ENCODE measurements at regions of chr3 and their contacts with region 1.

Region 1: DNA sequence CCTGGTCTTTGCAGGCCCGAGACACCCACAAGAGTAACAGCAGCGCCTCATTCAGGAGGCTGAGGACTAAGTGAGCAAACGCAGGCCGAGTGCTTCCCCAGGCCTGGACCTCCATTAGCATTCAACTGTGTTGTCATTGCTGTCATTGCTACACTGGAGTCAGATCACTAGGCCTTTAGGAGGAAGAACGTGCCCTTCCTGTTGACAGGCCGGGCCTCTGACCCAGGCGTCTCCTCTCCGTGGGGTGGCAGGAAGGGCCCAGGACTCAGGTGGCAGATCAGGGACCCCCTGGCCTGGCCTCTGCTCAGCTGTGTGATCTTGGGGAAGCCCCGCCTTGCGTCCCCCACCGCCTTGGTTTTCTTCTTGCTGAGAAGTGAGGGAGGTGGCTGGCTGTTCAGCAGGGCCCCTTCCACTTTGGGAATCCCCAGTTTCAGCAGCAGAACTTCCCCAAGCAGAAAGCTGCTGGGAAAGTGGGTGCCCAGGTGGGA is 19.1 kb downstream of the ZDHHC19 start:
- DNase-seq: peak in 7 of 9 experiments; percentile 12 to 87 (median 51)
- ATAC-seq: peak; percentile 39
- H3K4me3 ChIP-seq: no peak overlapping the region
- H3K4me3 Mint-ChIP-seq: peak overlapping the region; percentile 39
- H3K27ac ChIP-seq: peak overlapping the region; percentile 16 to 79
- H3K27ac Mint-ChIP-seq: peak overlapping the region; percentile 92
- H3K4me1 ChIP-seq: peaks cover 22% of the 10 kb centered on the region
- H3K4me1 Mint-ChIP-seq: peaks cover 18% of the 10 kb centered on the region
- H3K27me3 ChIP-seq: no peaks in the 10 kb centered on the region
- H3K27me3 Mint-ChIP-seq: no peaks in the 10 kb centered on the region
- CTCF ChIP-seq: no peak

Region 2: GRCh38 chr3:194757647-194758061 is 1434.4 kb before region 1 on chr3:
- CTCF ChIA-PET with region 1: no interaction called
- POLR2A ChIA-PET with region 1: no interaction called
- intact Hi-C with region 1: no loop called
- DNase-seq: no peak
- ATAC-seq: no peak
- H3K4me3 ChIP-seq: no peak overlapping the region
- H3K4me3 Mint-ChIP-seq: no peak overlapping the region
- H3K27ac ChIP-seq: no peak overlapping the region
- H3K27ac Mint-ChIP-seq: no peak overlapping the region
- H3K4me1 ChIP-seq: no peaks in the 10 kb centered on the region
- H3K4me1 Mint-ChIP-seq: no peaks in the 10 kb centered on the region
- H3K27me3 ChIP-seq: no peaks in the 10 kb centered on the region
- H3K27me3 Mint-ChIP-seq: peaks cover 6% of the 10 kb centered on the region
- CTCF ChIP-seq: no peak

Region 3: GRCh38 chr3:196207833-196208607 is 15.9 kb after region 1 on chr3:
- CTCF ChIA-PET with region 1: interaction called, 11 read pairs
- POLR2A ChIA-PET with region 1: no interaction called
- intact Hi-C with region 1: no loop called
- DNase-seq: peak; percentile 34 to 83 (median 64)
- ATAC-seq: peak; percentile 78
- H3K4me3 ChIP-seq: peak overlapping the region; percentile 57 to 71
- H3K4me3 Mint-ChIP-seq: peak overlapping the region; percentile 85
- H3K27ac ChIP-seq: no peak overlapping the region
- H3K27ac Mint-ChIP-seq: peak overlapping the region; percentile 38
- H3K4me1 ChIP-seq: peaks cover 7% of the 10 kb centered on the region
- H3K4me1 Mint-ChIP-seq: peaks cover 12% of the 10 kb centered on the region
- H3K27me3 ChIP-seq: no peaks in the 10 kb centered on the region
- H3K27me3 Mint-ChIP-seq: no peaks in the 10 kb centered on the region
- CTCF ChIP-seq: no peak

Measured in CD8-positive, alpha-beta T cell (primary cell).